ENCODE measurements at regions of chr14 and their contacts with region 1.

Region 1: GRCh38 chr14:60331201-60332045 is 82.4 kb downstream of the PPM1A start:
- DNase-seq: peak; percentile 67
- CTCF ChIP-seq: peak; percentile 86

Region 2: DNA sequence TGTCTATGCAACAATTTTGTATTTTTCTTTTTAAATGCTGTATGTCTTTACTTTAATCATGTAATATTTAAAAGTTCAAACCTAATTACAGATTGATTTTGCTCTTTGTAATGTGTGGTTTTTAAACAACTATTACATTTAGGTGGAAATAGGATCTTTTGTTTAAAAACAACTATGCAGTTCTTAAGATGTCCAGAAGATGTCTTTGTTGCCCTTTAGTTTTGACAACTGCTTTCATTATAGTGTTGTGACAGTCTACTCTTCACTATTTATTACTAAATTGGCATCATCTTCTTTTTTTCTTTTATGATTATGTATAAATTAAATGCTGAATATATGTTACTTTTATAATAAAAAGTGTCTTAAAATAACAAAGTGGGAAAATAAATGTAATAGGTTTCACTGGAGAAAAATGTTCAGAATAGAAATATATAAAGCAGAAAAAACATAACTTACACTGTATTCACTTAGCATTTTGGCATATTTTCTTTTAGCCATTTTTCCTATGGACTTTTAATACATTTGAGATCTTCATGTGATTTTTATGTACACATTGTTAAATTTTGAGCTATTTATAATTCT is 266.8 kb before region 1 on chr14:
- in situ Hi-C with region 1: loop called (anchors 25 kb)
- DNase-seq: peak; percentile 53
- CTCF ChIP-seq: peak; percentile 23

Region 3: DNA sequence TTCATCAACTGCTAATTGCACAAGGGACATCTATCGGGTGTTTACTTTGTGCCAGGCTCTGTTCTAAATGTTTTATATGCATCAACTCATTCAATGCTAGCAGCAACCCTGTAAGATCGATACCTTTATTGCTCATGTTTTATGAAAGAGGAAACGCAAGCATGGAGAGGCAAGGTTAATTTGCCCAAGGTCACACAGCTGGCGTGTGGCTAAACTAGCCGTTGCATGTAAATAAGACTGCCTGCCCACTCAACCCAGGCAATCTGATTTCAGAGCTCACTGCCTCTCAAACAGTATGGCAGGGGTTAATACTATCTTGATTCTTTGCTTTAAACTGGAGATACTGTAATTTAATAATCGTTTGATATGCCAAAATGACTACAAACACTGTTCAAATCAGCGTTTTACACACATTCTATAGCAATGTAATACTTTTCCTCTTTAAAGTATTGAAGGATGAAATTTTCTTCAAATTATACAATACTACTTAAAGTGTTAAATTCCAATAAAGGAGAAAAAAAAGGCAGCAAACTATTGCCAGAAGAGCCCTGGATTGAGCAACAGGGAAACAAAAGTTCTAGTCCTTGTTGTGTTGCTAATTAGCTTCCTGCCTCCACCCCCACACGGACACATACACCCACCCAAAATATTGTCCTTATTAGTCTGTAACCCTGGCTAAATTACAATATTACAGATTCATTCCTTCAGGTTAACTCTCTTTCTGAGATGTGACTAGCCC is 127.2 kb before region 1 on chr14:
- in situ Hi-C with region 1: loop called (anchors 10 kb)
- DNase-seq: no peak
- CTCF ChIP-seq: no peak

Measured in GM13976 (cell line).